ENCODE measurements at regions of chr7 and their contacts with region 1.

Region 1: DNA sequence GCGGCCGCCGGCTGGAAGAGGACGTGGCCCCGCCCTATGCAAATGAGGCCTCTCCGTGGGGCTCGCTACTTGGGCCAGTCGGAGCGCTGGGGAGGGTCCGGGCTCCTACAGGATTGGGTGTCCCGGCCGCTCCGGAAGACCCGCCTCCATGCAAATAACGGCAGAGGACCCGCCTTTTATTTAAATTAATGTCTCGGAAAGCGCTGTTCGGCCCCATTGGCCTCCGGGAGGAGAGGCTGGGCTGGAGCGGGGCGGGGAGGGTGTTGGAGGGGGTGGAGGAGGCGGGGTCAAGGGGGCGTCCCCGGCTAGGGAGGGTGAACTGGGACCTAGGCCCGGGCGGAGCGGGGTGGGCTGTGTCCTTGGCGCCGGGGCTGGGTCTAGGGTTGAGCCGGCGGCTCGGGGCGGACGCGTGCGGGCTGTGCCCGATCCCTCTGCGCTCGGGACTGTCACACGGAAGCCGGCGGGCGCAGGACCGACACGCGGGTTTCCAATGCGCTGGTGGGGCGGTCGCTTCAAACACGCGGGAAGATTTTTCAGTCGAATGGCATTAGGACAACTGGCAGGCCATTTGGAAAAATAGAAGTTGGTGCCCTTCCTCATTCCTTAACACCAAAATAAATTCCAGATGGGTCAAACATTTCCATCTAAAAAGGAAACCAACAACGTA is 344 bp upstream of the POLM start:
- DNase-seq: peak; percentile 99 to 100 (median 99)
- ATAC-seq: peak; percentile 93 to 96 (median 95)
- H3K4me3 ChIP-seq: peak overlapping the region; percentile 69 to 98 (median 87)
- H3K27ac ChIP-seq: peak overlapping the region; percentile 82 to 97 (median 92)
- H3K4me1 ChIP-seq: peaks cover 0 to 53% (median 26%) of the 10 kb centered on the region in 12 donors
- H3K27me3 ChIP-seq: no peaks in the 10 kb centered on the region
- CTCF ChIP-seq: peak in 1 of 12 donors; percentile 7
- POLR2A ChIP-seq: peak; percentile 34 to 82

Region 2: GRCh38 chr7:43479042-43479441 is 603.6 kb before region 1 on chr7:
- intact Hi-C with region 1: no loop called
- DNase-seq: no peak
- ATAC-seq: no peak
- H3K4me3 ChIP-seq: no peak overlapping the region
- H3K27ac ChIP-seq: no peak overlapping the region
- H3K4me1 ChIP-seq: peaks cover 0 to 4% (median 0%) of the 10 kb centered on the region in 12 donors
- H3K27me3 ChIP-seq: no peaks in the 10 kb centered on the region
- CTCF ChIP-seq: no peak
- POLR2A ChIP-seq: no peak

Region 3: GRCh38 chr7:43921423-43921822 is 161.3 kb before region 1 on chr7:
- intact Hi-C with region 1: no loop called
- DNase-seq: no peak
- ATAC-seq: no peak
- H3K4me3 ChIP-seq: no peak overlapping the region
- H3K27ac ChIP-seq: no peak overlapping the region
- H3K4me1 ChIP-seq: peaks cover 0 to 10% (median 6%) of the 10 kb centered on the region in 12 donors
- H3K27me3 ChIP-seq: no peaks in the 10 kb centered on the region
- CTCF ChIP-seq: no peak
- POLR2A ChIP-seq: no peak

Region 4: DNA sequence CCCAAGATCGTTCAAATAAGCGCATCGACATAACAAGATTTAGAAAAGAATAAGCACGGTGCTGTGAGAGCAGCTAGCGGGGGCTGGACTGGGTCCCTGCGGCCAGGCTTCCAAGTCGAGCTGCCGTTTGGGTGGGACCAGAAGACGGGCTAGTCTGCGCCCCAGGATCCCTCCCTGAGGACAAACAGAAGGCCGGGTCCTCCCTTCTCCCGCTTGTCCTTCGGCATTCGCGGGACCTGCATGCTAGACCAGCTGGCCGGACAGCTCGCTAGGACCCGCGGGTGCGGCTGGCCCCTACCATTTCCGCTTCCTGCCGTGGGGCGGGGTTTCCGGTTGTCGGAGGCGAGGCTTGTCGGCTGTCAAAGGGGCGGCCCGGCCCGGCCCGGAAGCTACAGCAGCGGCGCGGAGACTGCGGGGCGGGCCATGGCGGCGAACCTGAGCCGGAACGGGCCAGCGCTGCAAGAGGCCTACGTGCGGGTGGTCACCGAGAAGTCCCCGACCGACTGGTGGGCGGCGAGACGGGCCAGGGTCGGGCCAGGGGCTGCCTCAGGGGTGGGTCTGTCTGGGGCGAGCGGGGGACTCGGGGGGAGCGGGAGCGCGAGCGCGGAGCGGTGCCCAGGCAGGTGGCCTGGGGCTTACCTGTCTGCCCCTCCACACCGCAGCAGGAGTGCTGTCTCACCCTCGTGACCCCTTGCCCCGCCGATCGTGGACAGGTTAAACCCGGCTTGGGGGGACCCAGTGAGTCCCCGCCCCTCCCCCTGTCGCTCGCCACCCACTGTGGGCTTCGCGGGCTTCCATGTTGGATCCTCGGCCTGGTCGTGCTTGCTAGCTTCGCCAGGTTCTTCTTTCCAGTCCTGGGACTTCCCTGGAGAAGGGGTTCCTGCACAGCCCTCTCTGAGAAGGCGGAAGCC is 38.1 kb before region 1 on chr7 and contains the start of gene DBNL:
- intact Hi-C with region 1: loop called in 3 of 10 experiments (anchors 2 to 5 kb)
- DNase-seq: peak; percentile 96 to 98 (median 98)
- ATAC-seq: peak; percentile 88 to 95 (median 94)
- H3K4me3 ChIP-seq: peak within 1 kb of the TSS; percentile 56 to 99 (median 90)
- H3K27ac ChIP-seq: peak within 1 kb of the TSS; percentile 69 to 98 (median 92)
- H3K4me1 ChIP-seq: peaks cover 0 to 50% (median 26%) of the 10 kb centered on the region in 12 donors
- H3K27me3 ChIP-seq: no peaks in the 10 kb centered on the region
- CTCF ChIP-seq: no peak
- POLR2A ChIP-seq: peak in 1 of 2 donors; percentile 89
- total RNA-seq, gene DBNL: 29.9 to 76.7 (median 42.9) TPM

Region 5: DNA sequence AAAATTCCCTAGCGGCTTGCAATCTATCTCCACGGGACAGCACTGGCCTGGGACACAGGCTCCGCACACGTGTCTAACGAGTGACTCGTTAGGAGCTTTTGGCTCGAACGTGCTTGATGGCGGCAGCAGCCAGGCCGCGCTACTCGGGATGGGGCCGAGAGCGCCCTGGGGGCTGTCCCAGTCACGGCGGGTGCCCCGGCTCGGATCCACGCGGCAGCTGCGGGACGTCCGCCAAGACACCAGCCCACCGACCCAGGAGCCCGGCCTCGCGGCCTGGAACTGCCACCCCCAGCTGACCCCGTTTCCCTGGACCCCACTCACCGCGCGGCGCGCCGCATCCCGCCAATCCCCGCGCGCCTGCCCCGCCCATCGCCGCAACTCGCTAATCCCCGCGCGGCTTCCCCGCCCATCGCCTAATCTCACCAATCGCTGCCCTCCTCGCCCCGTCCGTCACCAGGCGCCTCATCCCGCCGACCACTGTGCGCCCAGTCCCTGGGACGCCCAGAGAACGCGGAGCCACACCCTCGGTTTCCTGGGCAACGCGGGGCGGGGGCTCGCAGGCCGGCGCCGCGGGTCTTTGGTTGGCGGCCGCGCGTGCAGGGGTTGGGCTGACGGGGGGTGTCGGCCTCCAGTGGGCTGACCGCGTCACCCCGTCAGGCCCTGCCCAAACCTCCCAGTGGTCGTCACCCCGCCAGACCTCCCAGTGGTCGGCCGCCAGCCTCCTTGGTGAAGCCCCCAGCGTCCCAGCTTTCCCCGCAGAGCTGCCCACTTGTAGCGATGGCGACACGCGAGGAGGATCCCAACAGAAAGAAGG is 40.7 kb after region 1 on chr7 and contains the start of gene POLD2:
- intact Hi-C with region 1: loop called in 9 of 10 experiments (anchors 1 to 5 kb)
- DNase-seq: peak; percentile 99
- ATAC-seq: peak; percentile 98 to 99 (median 99)
- H3K4me3 ChIP-seq: peak within 1 kb of the TSS; percentile 58 to 89 (median 77)
- H3K27ac ChIP-seq: peak within 1 kb of the TSS; percentile 71 to 94 (median 86)
- H3K4me1 ChIP-seq: peaks cover 0 to 38% (median 18%) of the 10 kb centered on the region in 12 donors
- H3K27me3 ChIP-seq: no peaks in the 10 kb centered on the region
- CTCF ChIP-seq: peak in 3 of 12 donors; percentile 14 to 22 (median 18)
- POLR2A ChIP-seq: peak in 1 of 2 donors; percentile 53
- total RNA-seq, gene POLD2: 74.1 to 150 (median 89.2) TPM

Region 6: DNA sequence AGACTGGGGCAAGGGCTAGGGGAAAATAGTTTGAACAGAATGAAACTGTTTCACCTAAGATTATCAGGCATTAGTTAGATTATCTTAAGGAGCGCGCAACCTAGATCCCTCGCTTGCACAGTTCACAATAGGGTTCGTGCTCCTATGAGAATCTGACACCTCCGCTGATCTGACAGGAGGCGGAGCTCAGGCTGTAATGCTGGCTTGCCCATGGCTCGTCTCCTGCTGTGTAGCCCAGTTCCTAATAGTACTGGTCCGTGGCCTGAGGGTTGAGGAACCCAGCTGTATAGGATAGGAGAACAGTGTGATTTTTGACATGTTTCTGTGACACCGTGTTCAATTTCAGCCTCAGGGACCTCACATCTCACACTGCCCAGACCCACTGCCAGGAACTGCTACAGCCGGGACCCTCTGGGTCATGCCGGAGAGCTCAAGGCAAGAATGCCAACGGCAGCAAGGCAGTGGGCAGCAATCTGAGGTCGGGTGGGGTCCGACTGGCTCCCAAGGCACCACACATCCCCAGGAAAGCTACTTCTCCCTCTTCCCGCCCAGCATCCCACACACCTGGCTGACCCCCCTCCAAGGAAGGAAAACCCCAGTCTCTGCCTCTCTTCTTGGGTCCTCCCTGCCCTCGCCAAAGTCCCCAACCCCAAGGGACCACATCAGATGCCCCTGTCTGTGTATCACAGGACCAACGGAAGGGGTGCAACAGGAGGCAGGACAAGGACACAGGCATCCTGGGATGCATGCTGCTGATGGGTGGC is 211.1 kb after region 1 on chr7:
- intact Hi-C with region 1: no loop called
- DNase-seq: peak; percentile 30 to 64 (median 51)
- ATAC-seq: peak; percentile 48 to 51 (median 50)
- H3K4me3 ChIP-seq: no peak overlapping the region
- H3K27ac ChIP-seq: peak overlapping the region in 9 of 12 donors; percentile 23 to 91 (median 63)
- H3K4me1 ChIP-seq: peaks cover 0 to 72% (median 47%) of the 10 kb centered on the region in 12 donors
- H3K27me3 ChIP-seq: peaks cover 0 to 4% (median 0%) of the 10 kb centered on the region in 9 donors
- CTCF ChIP-seq: no peak
- POLR2A ChIP-seq: no peak

Region 7: GRCh38 chr7:44665531-44666213 is 583.0 kb after region 1 on chr7:
- intact Hi-C with region 1: no loop called
- DNase-seq: no peak
- ATAC-seq: no peak
- H3K4me3 ChIP-seq: no peak overlapping the region
- H3K27ac ChIP-seq: peak overlapping the region in 1 of 12 donors; percentile 41
- H3K4me1 ChIP-seq: peaks cover 0 to 19% (median 0%) of the 10 kb centered on the region in 12 donors
- H3K27me3 ChIP-seq: no peaks in the 10 kb centered on the region
- CTCF ChIP-seq: no peak
- POLR2A ChIP-seq: no peak